Naive thymus-derived CD4-positive, alpha-beta T cell (primary cell): ENCODE measurements at regions of chr12 and their contacts with region 1.

Region 1: GRCh38 chr12:52582971-52583456 is 9.4 kb upstream of the KRT74 start:
- DNase-seq: peak; percentile 47 to 83 (median 76)
- ATAC-seq: peak; percentile 67
- H3K4me3 ChIP-seq: no peak overlapping the region
- H3K4me3 Mint-ChIP-seq: peak overlapping the region in 5 of 10 donors; percentile 9 to 50 (median 31)
- H3K27ac ChIP-seq: peak overlapping the region; percentile 20
- H3K27ac Mint-ChIP-seq: peak overlapping the region; percentile 21 to 97 (median 85)
- H3K4me1 ChIP-seq: peaks cover 0 to 60% of the 10 kb centered on the region in 2 donors
- H3K4me1 Mint-ChIP-seq: peaks cover 39 to 72% (median 64%) of the 10 kb centered on the region in 7 donors
- H3K27me3 ChIP-seq: no peaks in the 10 kb centered on the region
- H3K27me3 Mint-ChIP-seq: peaks cover 0 to 4% (median 0%) of the 10 kb centered on the region in 5 donors

Region 2: GRCh38 chr12:52495389-52495788 is 87.6 kb before region 1 on chr12:
- CTCF ChIA-PET with region 1: no interaction called
- POLR2A ChIA-PET with region 1: no interaction called
- intact Hi-C with region 1: no loop called
- DNase-seq: no peak
- ATAC-seq: no peak
- H3K4me3 ChIP-seq: no peak overlapping the region
- H3K4me3 Mint-ChIP-seq: no peak overlapping the region
- H3K27ac ChIP-seq: no peak overlapping the region
- H3K27ac Mint-ChIP-seq: no peak overlapping the region
- H3K4me1 ChIP-seq: no peaks in the 10 kb centered on the region
- H3K4me1 Mint-ChIP-seq: peaks cover 0 to 3% (median 0%) of the 10 kb centered on the region in 7 donors
- H3K27me3 ChIP-seq: no peaks in the 10 kb centered on the region
- H3K27me3 Mint-ChIP-seq: peaks cover 16 to 36% (median 23%) of the 10 kb centered on the region in 5 donors

Region 3: GRCh38 chr12:52506858-52507715 is 75.9 kb before region 1 on chr12:
- CTCF ChIA-PET with region 1: no interaction called
- POLR2A ChIA-PET with region 1: no interaction called
- intact Hi-C with region 1: no loop called
- DNase-seq: peak in 5 of 9 donors; percentile 13 to 37 (median 26)
- ATAC-seq: peak; percentile 60
- H3K4me3 ChIP-seq: no peak overlapping the region
- H3K4me3 Mint-ChIP-seq: no peak overlapping the region
- H3K27ac ChIP-seq: no peak overlapping the region
- H3K27ac Mint-ChIP-seq: no peak overlapping the region
- H3K4me1 ChIP-seq: no peaks in the 10 kb centered on the region
- H3K4me1 Mint-ChIP-seq: peaks cover 0 to 3% (median 0%) of the 10 kb centered on the region in 7 donors
- H3K27me3 ChIP-seq: no peaks in the 10 kb centered on the region
- H3K27me3 Mint-ChIP-seq: peaks cover 18 to 49% (median 36%) of the 10 kb centered on the region in 5 donors

Region 4: DNA sequence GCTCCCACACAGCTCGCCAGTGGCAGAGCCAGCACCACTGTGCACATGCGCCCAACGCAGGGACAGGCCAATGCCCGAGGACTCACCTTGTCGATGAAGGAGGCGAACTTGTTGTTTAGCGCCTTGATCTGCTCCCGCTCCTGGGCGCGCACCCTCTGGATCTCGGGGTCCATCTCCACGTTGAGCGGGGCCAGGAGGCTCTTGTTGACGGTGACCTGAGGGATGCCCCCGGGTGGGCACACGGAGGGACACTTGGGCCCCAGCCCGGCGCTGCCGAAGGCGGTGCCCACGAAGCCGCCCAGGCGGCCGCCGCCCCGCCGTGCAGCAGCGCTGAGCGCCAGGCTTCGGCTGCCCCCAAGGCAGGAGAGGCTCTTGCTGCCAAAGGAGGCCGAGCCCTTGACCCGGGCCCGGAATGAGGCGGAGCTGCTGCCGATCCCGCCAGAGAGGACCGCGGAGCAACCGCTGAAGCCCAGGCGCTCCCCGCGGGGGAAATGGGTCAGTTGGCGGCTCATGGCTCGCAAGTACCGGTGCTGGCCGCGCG is 18.0 kb after region 1 on chr12 and contains the start of gene KRT72:
- CTCF ChIA-PET with region 1: interaction called, 29 read pairs
- POLR2A ChIA-PET with region 1: interaction called, 15 read pairs
- intact Hi-C with region 1: no loop called
- DNase-seq: peak in 1 of 9 donors; percentile 12
- ATAC-seq: no peak
- H3K4me3 ChIP-seq: no peak within 1 kb of the TSS
- H3K4me3 Mint-ChIP-seq: peak within 1 kb of the TSS in 6 of 10 donors; percentile 29 to 71 (median 64)
- H3K27ac ChIP-seq: no peak within 1 kb of the TSS
- H3K27ac Mint-ChIP-seq: peak within 1 kb of the TSS in 8 of 9 donors; percentile 37 to 97 (median 93)
- H3K4me1 ChIP-seq: peaks cover 0 to 40% of the 10 kb centered on the region in 2 donors
- H3K4me1 Mint-ChIP-seq: peaks cover 18 to 72% (median 61%) of the 10 kb centered on the region in 7 donors
- H3K27me3 ChIP-seq: no peaks in the 10 kb centered on the region
- H3K27me3 Mint-ChIP-seq: peaks cover 0 to 32% (median 0%) of the 10 kb centered on the region in 5 donors
- total RNA-seq, gene KRT72: 2.1 to 149 (median 104) TPM

Region 5: DNA sequence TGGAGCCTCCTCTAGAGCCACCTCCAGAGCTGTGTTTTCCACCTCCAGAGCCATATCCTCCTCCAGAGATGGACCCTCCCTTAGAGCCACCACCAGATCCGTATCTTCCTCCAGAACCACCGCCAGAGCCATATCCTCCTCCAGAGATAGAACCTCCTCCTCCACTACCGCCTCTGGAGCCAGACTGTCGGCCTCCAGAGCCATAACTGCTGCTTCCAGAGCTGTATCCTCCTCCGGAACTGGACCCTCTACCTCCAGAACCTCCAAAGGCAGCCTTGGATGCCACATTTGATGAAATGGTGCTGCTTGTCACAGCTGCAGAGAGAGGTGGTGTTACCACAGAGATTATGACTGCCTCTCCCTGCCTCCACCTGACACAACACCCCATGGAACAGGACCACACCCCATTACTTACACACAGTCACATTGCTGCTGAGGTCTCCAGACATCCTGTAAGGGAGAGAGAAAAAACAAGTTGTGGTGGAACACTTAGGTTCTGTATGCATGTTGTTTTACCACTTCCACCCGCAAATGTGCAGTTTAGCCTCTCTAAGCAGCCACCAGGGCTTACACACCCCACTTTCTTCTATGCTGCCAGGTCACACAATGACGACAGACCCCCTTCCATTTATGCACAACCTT is 62.2 kb after region 1 on chr12:
- CTCF ChIA-PET with region 1: interaction called, 11 read pairs
- POLR2A ChIA-PET with region 1: interaction called, 15 read pairs
- intact Hi-C with region 1: loop called (anchors 1 kb)
- DNase-seq: peak in 7 of 9 donors; percentile 81 to 98 (median 94)
- ATAC-seq: peak; percentile 96
- H3K4me3 ChIP-seq: no peak overlapping the region
- H3K4me3 Mint-ChIP-seq: peak overlapping the region; percentile 72 to 88 (median 83)
- H3K27ac ChIP-seq: peak overlapping the region; percentile 92
- H3K27ac Mint-ChIP-seq: peak overlapping the region; percentile 97 to 100 (median 100)
- H3K4me1 ChIP-seq: peaks cover 28 to 81% of the 10 kb centered on the region in 2 donors
- H3K4me1 Mint-ChIP-seq: peaks cover 68 to 99% (median 94%) of the 10 kb centered on the region in 7 donors
- H3K27me3 ChIP-seq: no peaks in the 10 kb centered on the region
- H3K27me3 Mint-ChIP-seq: peaks cover 0 to 17% (median 0%) of the 10 kb centered on the region in 5 donors

Region 6: DNA sequence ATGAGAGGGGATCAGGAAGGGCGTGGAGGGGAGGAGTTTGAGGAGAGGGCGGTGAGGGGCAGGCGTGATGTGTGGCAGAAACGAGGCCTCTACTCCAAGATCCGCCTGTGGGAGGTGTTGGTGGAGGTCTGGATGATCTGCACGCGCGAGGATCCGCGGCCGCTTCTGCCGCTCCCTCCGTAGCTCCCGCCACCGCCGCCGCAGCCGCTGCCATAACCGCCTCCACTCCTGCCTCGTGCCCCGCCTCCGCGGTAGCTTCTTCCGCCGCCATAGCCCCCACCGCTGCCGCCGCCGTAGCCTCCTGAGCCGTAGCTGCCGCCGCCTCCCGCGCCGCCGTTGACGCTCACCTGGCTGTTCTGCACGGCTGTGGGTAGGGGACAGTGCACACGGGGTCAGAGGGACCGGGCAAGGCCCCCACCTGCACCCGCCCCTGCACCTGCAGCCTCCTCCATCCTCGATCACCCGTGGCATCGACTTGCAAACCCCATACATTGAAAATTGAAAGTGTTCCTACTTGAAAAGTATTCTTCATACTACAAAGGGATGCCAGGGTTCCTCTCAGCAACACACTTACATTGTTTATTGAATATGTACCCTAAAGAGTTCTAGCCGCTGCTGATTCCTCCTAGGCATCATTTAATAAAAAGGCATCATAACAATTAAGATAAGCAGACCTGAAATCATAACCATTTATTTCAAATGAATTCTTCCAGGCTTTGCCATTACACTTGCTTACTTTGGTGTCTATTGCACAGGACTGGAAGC is 108.2 kb after region 1 on chr12:
- CTCF ChIA-PET with region 1: interaction called, 5 read pairs
- POLR2A ChIA-PET with region 1: interaction called, 8 read pairs
- intact Hi-C with region 1: loop called in 1 of 2 experiments (anchors 1 kb)
- DNase-seq: peak; percentile 46 to 74 (median 71)
- ATAC-seq: peak; percentile 91
- H3K4me3 ChIP-seq: peak overlapping the region; percentile 50
- H3K4me3 Mint-ChIP-seq: peak overlapping the region; percentile 85 to 97 (median 91)
- H3K27ac ChIP-seq: peak overlapping the region; percentile 68
- H3K27ac Mint-ChIP-seq: peak overlapping the region in 8 of 9 donors; percentile 90 to 98 (median 97)
- H3K4me1 ChIP-seq: peaks cover 5 to 27% of the 10 kb centered on the region in 2 donors
- H3K4me1 Mint-ChIP-seq: peaks cover 8 to 63% (median 55%) of the 10 kb centered on the region in 7 donors
- H3K27me3 ChIP-seq: no peaks in the 10 kb centered on the region
- H3K27me3 Mint-ChIP-seq: peaks cover 0 to 79% (median 0%) of the 10 kb centered on the region in 5 donors

Region 7: GRCh38 chr12:52741392-52742195 is 158.6 kb after region 1 on chr12:
- CTCF ChIA-PET with region 1: no interaction called
- POLR2A ChIA-PET with region 1: no interaction called
- intact Hi-C with region 1: loop called in 1 of 2 experiments (anchors 5 kb)
- DNase-seq: peak; percentile 31 to 73 (median 57)
- ATAC-seq: peak; percentile 61
- H3K4me3 ChIP-seq: no peak overlapping the region
- H3K4me3 Mint-ChIP-seq: no peak overlapping the region
- H3K27ac ChIP-seq: no peak overlapping the region
- H3K27ac Mint-ChIP-seq: no peak overlapping the region
- H3K4me1 ChIP-seq: no peaks in the 10 kb centered on the region
- H3K4me1 Mint-ChIP-seq: peaks cover 0 to 4% (median 0%) of the 10 kb centered on the region in 7 donors
- H3K27me3 ChIP-seq: no peaks in the 10 kb centered on the region
- H3K27me3 Mint-ChIP-seq: peaks cover 0 to 13% (median 6%) of the 10 kb centered on the region in 5 donors

Region 8: DNA sequence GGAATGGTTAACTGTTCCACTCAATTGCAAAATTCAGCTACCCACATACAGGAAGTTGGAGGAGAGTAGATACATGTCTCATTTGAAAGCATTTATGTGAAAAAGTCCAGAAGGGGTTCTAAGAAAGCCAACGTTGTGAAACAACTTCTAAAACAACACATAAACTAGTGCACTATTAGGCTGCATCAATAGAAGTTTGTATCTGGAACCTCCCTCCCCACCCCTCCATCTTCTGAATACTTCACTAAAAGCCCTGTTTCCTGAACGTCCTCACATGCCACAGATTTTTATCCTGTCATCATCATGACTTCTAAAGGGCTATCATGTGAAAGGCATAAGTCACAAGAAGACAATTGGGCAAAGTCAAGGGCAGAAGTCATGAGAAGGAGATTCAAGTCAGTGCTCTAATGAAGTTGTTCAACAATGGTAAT is 245.6 kb after region 1 on chr12:
- CTCF ChIA-PET with region 1: interaction called, 10 read pairs
- POLR2A ChIA-PET with region 1: no interaction called
- intact Hi-C with region 1: no loop called
- DNase-seq: no peak
- ATAC-seq: no peak
- H3K4me3 ChIP-seq: no peak overlapping the region
- H3K4me3 Mint-ChIP-seq: no peak overlapping the region
- H3K27ac ChIP-seq: no peak overlapping the region
- H3K27ac Mint-ChIP-seq: peak overlapping the region in 3 of 9 donors; percentile 0 to 40 (median 3)
- H3K4me1 ChIP-seq: no peaks in the 10 kb centered on the region
- H3K4me1 Mint-ChIP-seq: peaks cover 1 to 15% (median 12%) of the 10 kb centered on the region in 7 donors
- H3K27me3 ChIP-seq: no peaks in the 10 kb centered on the region
- H3K27me3 Mint-ChIP-seq: no peaks in the 10 kb centered on the region

Region 9: GRCh38 chr12:52980693-52981423 is 397.8 kb after region 1 on chr12:
- CTCF ChIA-PET with region 1: interaction called, 7 read pairs
- POLR2A ChIA-PET with region 1: no interaction called
- intact Hi-C with region 1: loop called (anchors 2 kb)
- DNase-seq: peak; percentile 53 to 85 (median 79)
- ATAC-seq: peak; percentile 98
- H3K4me3 ChIP-seq: no peak overlapping the region
- H3K4me3 Mint-ChIP-seq: no peak overlapping the region
- H3K27ac ChIP-seq: no peak overlapping the region
- H3K27ac Mint-ChIP-seq: peak overlapping the region in 1 of 9 donors; percentile 17
- H3K4me1 ChIP-seq: no peaks in the 10 kb centered on the region
- H3K4me1 Mint-ChIP-seq: peaks cover 0 to 7% (median 0%) of the 10 kb centered on the region in 7 donors
- H3K27me3 ChIP-seq: no peaks in the 10 kb centered on the region
- H3K27me3 Mint-ChIP-seq: peaks cover 23 to 44% (median 26%) of the 10 kb centered on the region in 5 donors